B cell (primary cell): ENCODE measurements at regions of chr2 and their contacts with region 1.

Region 1: DNA sequence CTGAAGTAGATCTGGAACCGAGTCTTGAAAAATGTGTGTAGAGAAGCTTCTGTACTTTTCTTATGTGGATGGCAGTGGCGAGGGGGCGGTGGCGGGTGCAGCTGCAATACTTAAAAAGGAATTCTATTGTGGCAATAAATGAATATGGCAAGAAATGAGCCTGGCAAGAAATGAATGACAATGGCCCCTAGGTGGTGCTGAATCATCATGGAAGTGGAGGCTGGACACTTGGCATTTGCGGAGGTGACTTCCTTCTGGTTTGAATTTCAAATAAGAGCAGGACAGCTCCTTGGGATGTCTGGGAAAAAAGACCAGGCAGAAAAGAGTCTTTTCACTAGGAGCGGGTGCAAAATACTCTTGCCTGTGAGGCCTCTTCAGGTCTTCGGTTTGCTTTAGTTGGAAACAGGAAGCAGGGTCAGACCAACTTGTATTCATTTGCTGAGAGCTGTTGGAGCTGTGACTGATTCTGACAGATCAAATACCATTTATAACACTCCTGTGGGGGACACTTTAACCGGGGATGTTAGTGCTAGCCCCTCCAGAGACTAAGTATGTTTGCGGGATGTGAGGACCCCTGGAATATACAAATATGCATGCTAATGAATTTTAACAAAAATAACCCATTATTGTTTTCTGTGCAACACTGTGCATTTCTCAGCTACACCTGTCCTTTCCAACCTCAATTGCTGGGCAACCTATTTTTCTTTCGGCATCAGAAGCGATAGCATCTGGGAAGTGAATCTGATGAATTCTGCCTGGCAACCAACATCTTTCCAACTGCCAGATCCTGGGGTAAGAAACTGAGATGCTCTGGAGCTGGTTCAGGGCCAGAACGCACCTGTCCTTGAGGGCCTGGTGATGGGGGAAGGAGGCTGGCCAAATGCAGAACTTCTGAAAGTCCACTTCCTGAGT is 35.4 kb downstream of the FASTKD2 start:
- DNase-seq: peak; percentile 71
- ATAC-seq: peak; percentile 36
- H3K4me3 ChIP-seq: peak overlapping the region in 3 of 5 experiments; percentile 36 to 49 (median 45)
- H3K4me3 Mint-ChIP-seq: peak overlapping the region; percentile 80
- H3K27ac ChIP-seq: no peak overlapping the region
- H3K27ac Mint-ChIP-seq: no peak overlapping the region
- H3K4me1 ChIP-seq: peaks cover 0 to 5% of the 10 kb centered on the region in 2 donors
- H3K4me1 Mint-ChIP-seq: peaks cover 11% of the 10 kb centered on the region
- H3K27me3 ChIP-seq: no peaks in the 10 kb centered on the region
- H3K27me3 Mint-ChIP-seq: no peaks in the 10 kb centered on the region
- CTCF ChIP-seq: peak; percentile 78

Region 2: GRCh38 chr2:206693399-206694137 is 107.2 kb before region 1 on chr2:
- CTCF ChIA-PET with region 1: interaction called, 3 read pairs
- POLR2A ChIA-PET with region 1: no interaction called
- intact Hi-C with region 1: loop called (anchors 5 kb)
- DNase-seq: peak; percentile 70
- ATAC-seq: peak; percentile 36
- H3K4me3 ChIP-seq: no peak overlapping the region
- H3K4me3 Mint-ChIP-seq: no peak overlapping the region
- H3K27ac ChIP-seq: no peak overlapping the region
- H3K27ac Mint-ChIP-seq: no peak overlapping the region
- H3K4me1 ChIP-seq: no peaks in the 10 kb centered on the region
- H3K4me1 Mint-ChIP-seq: no peaks in the 10 kb centered on the region
- H3K27me3 ChIP-seq: no peaks in the 10 kb centered on the region
- H3K27me3 Mint-ChIP-seq: peaks cover 17% of the 10 kb centered on the region
- CTCF ChIP-seq: peak; percentile 80

Region 3: DNA sequence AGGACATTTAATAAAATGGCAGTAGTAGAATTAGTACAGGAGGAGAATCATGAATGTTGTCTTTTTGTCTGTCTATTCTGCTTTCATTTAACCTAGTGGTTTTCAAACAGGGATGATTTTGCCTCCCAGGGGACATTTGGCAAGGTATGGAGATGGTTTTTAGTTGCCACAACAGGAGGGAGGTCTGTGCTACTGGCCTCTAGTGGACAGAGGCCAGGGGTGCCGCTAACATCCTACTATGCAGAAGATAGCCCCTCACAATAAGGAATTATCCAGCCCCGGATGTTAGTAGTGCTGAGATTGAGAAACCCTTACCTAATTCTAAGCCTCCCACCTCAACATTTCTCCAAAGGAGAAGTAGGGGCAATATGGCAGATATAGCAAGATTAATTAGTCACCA is 17.0 kb before region 1 on chr2:
- CTCF ChIA-PET with region 1: interaction called, 10 read pairs
- POLR2A ChIA-PET with region 1: no interaction called
- intact Hi-C with region 1: no loop called
- DNase-seq: no peak
- ATAC-seq: no peak
- H3K4me3 ChIP-seq: no peak overlapping the region
- H3K4me3 Mint-ChIP-seq: no peak overlapping the region
- H3K27ac ChIP-seq: no peak overlapping the region
- H3K27ac Mint-ChIP-seq: no peak overlapping the region
- H3K4me1 ChIP-seq: no peaks in the 10 kb centered on the region
- H3K4me1 Mint-ChIP-seq: no peaks in the 10 kb centered on the region
- H3K27me3 ChIP-seq: no peaks in the 10 kb centered on the region
- H3K27me3 Mint-ChIP-seq: no peaks in the 10 kb centered on the region
- CTCF ChIP-seq: peak; percentile 11

Region 4: GRCh38 chr2:207143215-207144172 is 342.7 kb after region 1 on chr2:
- CTCF ChIA-PET with region 1: interaction called, 3 read pairs
- POLR2A ChIA-PET with region 1: no interaction called
- intact Hi-C with region 1: loop called (anchors 10 kb)
- DNase-seq: peak; percentile 86
- ATAC-seq: peak; percentile 77
- H3K4me3 ChIP-seq: peak overlapping the region; percentile 43 to 71 (median 56)
- H3K4me3 Mint-ChIP-seq: peak overlapping the region; percentile 89
- H3K27ac ChIP-seq: peak overlapping the region; percentile 93 to 99
- H3K27ac Mint-ChIP-seq: peak overlapping the region; percentile 94
- H3K4me1 ChIP-seq: peaks cover 57 to 62% of the 10 kb centered on the region in 2 donors
- H3K4me1 Mint-ChIP-seq: peaks cover 68% of the 10 kb centered on the region
- H3K27me3 ChIP-seq: no peaks in the 10 kb centered on the region
- H3K27me3 Mint-ChIP-seq: no peaks in the 10 kb centered on the region
- CTCF ChIP-seq: no peak

Region 5: GRCh38 chr2:208040199-208041171 is 1239.7 kb after region 1 on chr2:
- CTCF ChIA-PET with region 1: interaction called, 4 read pairs
- POLR2A ChIA-PET with region 1: no interaction called
- intact Hi-C with region 1: loop called (anchors 2 kb)
- DNase-seq: peak; percentile 71
- ATAC-seq: peak; percentile 73
- H3K4me3 ChIP-seq: no peak overlapping the region
- H3K4me3 Mint-ChIP-seq: no peak overlapping the region
- H3K27ac ChIP-seq: no peak overlapping the region
- H3K27ac Mint-ChIP-seq: no peak overlapping the region
- H3K4me1 ChIP-seq: no peaks in the 10 kb centered on the region
- H3K4me1 Mint-ChIP-seq: no peaks in the 10 kb centered on the region
- H3K27me3 ChIP-seq: peaks cover 0 to 4% (median 0%) of the 10 kb centered on the region in 4 experiments
- H3K27me3 Mint-ChIP-seq: no peaks in the 10 kb centered on the region
- CTCF ChIP-seq: peak; percentile 75

Region 6: DNA sequence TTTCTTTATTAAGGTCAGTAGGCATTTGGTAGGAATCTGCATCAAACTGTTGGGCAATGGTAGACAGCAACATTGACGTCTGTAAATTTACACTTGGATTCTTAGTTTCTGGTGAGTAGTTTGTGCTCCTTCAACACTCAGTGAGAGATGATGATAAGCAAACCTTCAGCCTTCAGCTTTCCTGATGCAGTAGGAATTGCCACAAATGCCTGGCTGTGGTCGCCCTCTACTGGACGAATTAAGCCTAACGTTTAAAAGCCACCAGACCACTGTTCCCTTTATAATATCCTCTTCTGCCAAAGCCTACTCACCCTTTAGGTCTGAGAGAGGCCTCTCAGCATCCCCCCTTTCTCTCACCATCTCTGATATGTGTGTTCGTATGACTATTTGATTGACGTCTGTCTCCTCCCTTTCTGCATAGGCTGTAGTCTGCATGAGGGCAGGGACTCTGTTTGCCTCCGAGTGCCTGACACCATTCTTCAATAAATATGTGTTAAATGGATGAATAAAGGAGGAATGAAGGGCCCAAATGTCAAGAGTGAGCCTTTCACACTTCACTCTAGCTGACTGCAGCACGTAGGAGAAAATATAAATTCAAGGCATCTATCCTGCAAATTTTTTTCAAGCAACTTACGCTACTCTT is 1271.6 kb after region 1 on chr2:
- CTCF ChIA-PET with region 1: interaction called, 4 read pairs
- POLR2A ChIA-PET with region 1: no interaction called
- intact Hi-C with region 1: loop called (anchors 1 kb)
- DNase-seq: peak; percentile 72
- ATAC-seq: peak; percentile 69
- H3K4me3 ChIP-seq: no peak overlapping the region
- H3K4me3 Mint-ChIP-seq: no peak overlapping the region
- H3K27ac ChIP-seq: no peak overlapping the region
- H3K27ac Mint-ChIP-seq: no peak overlapping the region
- H3K4me1 ChIP-seq: no peaks in the 10 kb centered on the region
- H3K4me1 Mint-ChIP-seq: no peaks in the 10 kb centered on the region
- H3K27me3 ChIP-seq: peaks cover 0 to 4% (median 0%) of the 10 kb centered on the region in 4 experiments
- H3K27me3 Mint-ChIP-seq: peaks cover 19% of the 10 kb centered on the region
- CTCF ChIP-seq: peak; percentile 89